ENCODE measurements at regions of chr19 and their contacts with region 1.

Region 1: GRCh38 chr19:46016426-46017094 is 6.3 kb downstream of the PGLYRP1 start:
- DNase-seq: peak; percentile 84 to 87
- ATAC-seq: peak; percentile 69 to 85
- H3K4me3 ChIP-seq: peak overlapping the region; percentile 59
- H3K27ac ChIP-seq: peak overlapping the region; percentile 54 to 80; a peak in 5 of 6 replicates
- H3K4me1 ChIP-seq: peaks cover 20% of the 10 kb centered on the region
- CTCF ChIP-seq: peak; percentile 74
- EP300 ChIP-seq: no peak
- POLR2A ChIP-seq: no peak
- RAD21 ChIP-seq: peak; percentile 35 to 61; a peak in 4 of 5 replicates

Region 2: GRCh38 chr19:46068345-46069258 is 52.0 kb after region 1 on chr19:
- CTCF ChIA-PET with region 1: interaction called, 10 read pairs
- POLR2A ChIA-PET with region 1: interaction called, 6 read pairs
- DNase-seq: peak; percentile 68 to 72
- ATAC-seq: peak; percentile 71 to 73
- H3K4me3 ChIP-seq: no peak overlapping the region
- H3K27ac ChIP-seq: peak overlapping the region; percentile 87 to 89
- H3K4me1 ChIP-seq: peaks cover 68% of the 10 kb centered on the region
- CTCF ChIP-seq: no peak
- EP300 ChIP-seq: peak; percentile 89 to 96; a peak in 4 of 5 replicates
- POLR2A ChIP-seq: no peak
- RAD21 ChIP-seq: peak in 1 of 2 experiments; percentile 36; a peak in 1 of 5 replicates

Region 3: DNA sequence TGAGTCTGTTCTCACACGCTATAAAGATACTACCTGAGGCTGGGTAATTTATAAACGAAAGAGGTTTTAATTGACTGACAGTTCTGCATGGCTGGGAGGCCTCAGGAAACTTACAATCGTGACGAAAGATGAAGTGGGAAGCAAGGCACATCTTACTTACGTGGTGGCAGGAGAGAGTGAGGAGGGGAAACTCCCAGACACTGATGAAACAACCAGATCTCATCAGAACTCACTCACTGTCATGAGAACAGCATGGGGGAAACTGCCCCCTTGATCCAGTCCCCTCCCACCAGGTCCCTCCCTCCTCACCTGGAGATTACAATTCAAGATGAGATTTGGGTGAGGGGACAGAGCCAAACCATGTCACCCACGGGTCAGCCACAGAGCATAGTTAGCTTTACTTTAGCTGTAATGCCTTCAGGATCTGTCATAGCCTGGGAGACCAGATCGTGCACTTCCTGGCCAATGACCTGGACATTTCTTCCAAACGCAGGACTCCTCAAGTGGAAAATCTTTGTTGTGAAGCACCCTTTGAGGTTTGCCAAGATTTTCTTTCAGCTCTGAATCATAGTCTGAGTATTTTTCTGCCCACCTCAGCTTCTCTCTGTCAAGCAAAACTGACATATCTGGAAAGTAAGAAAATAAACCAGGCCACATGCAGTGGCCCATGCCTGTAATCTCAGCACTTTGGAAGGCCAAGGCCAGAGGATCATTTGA is 255.1 kb after region 1 on chr19:
- CTCF ChIA-PET with region 1: interaction called, 227 read pairs
- POLR2A ChIA-PET with region 1: no interaction called
- DNase-seq: peak; percentile 77 to 87
- ATAC-seq: peak; percentile 96 to 99
- H3K4me3 ChIP-seq: no peak overlapping the region
- H3K27ac ChIP-seq: peak overlapping the region; percentile 75 to 83
- H3K4me1 ChIP-seq: peaks cover 39% of the 10 kb centered on the region
- CTCF ChIP-seq: no peak
- EP300 ChIP-seq: peak; percentile 26 to 73; a peak in 2 of 5 replicates
- POLR2A ChIP-seq: no peak
- RAD21 ChIP-seq: no peak

Measured in A549 (cell line).